Activated naive CD8-positive, alpha-beta T cell treated with anti-CD3 and anti-CD28 coated beads, Interleukin-2, amount 10 ng/mL, durations not matched to agents 7 days and 5 days (primary cell): ENCODE measurements at regions of chr1 and their contacts with region 1.

Region 1: DNA sequence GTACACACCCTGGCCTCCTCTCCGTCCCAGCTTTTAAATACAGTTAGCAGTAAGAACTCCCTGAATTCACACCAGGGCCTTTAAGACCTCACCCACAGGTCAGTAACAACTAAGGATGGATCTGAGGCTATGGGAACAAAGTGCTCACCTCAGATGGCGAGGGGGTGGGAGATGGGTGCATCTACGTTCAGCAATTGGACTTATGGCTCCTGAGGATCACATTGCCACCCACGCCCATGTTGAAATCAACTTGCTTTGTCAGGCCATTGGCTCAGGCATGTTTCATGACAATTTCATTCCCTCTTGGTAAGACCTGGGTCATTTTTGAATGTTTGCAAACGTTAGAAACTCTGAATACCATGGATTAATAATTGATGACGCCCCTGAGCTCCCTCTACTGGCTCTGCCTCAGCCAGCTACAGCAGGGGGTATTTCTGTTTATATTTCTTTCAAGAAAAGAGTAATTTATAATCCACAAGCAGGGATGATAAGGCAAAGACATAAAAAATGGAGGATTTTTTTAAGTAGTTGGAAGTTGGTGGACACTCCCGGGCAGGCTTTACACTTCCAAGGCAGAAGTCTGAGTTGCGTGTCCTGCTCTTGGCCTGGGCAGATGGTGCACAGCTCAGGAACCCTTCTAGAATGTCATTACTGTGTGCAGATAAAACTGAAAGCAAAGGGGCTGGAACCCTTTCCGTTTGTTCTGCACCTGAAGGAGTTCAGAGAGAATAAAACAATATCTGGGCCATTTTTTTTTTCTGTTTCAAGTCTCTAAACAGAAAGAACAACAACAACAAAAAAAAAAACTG is 13.7 kb upstream of the LBR start:
- DNase-seq: no peak
- ATAC-seq: no peak
- H3K4me3 Mint-ChIP-seq: peak overlapping the region; percentile 74
- H3K27ac Mint-ChIP-seq: peak overlapping the region; percentile 84
- H3K4me1 Mint-ChIP-seq: peaks cover 51% of the 10 kb centered on the region
- H3K27me3 Mint-ChIP-seq: no peaks in the 10 kb centered on the region

Region 2: GRCh38 chr1:225428068-225428880 is 13.2 kb before region 1 on chr1:
- POLR2A ChIA-PET with region 1: interaction called, 203 read pairs
- DNase-seq: peak; percentile 94
- ATAC-seq: peak; percentile 93
- H3K4me3 Mint-ChIP-seq: peak overlapping the region; percentile 87
- H3K27ac Mint-ChIP-seq: peak overlapping the region; percentile 89
- H3K4me1 Mint-ChIP-seq: peaks cover 43% of the 10 kb centered on the region
- H3K27me3 Mint-ChIP-seq: peaks cover 2% of the 10 kb centered on the region

Region 3: GRCh38 chr1:225454733-225455132 is 13.2 kb after region 1 on chr1:
- POLR2A ChIA-PET with region 1: interaction called, 226 read pairs
- DNase-seq: no peak
- ATAC-seq: peak; percentile 78
- H3K4me3 Mint-ChIP-seq: no peak overlapping the region
- H3K27ac Mint-ChIP-seq: peak overlapping the region; percentile 4
- H3K4me1 Mint-ChIP-seq: peaks cover 28% of the 10 kb centered on the region
- H3K27me3 Mint-ChIP-seq: no peaks in the 10 kb centered on the region